ENCODE measurements at regions of chr17 and their contacts with region 1.

Region 1: GRCh38 chr17:57783106-57783742 is 38.1 kb upstream of the CCDC182 start:
- DNase-seq: peak; percentile 58 to 66 (median 64)
- H3K4me3 ChIP-seq: no peak overlapping the region
- H3K4me3 Mint-ChIP-seq: peak overlapping the region in 2 of 8 donors; percentile 2 to 23
- H3K27ac ChIP-seq: no peak overlapping the region
- H3K27ac Mint-ChIP-seq: no peak overlapping the region
- H3K4me1 ChIP-seq: peaks cover 11% of the 10 kb centered on the region
- H3K4me1 Mint-ChIP-seq: peaks cover 0 to 2% (median 0%) of the 10 kb centered on the region in 4 donors
- H3K27me3 ChIP-seq: peaks cover 8% of the 10 kb centered on the region
- H3K27me3 Mint-ChIP-seq: peaks cover 20 to 25% of the 10 kb centered on the region in 2 donors

Region 2: GRCh38 chr17:57766318-57766943 is 16.8 kb before region 1 on chr17:
- CTCF ChIA-PET with region 1: interaction called, 10 read pairs
- POLR2A ChIA-PET with region 1: no interaction called
- intact Hi-C with region 1: no loop called
- DNase-seq: no peak
- H3K4me3 ChIP-seq: no peak overlapping the region
- H3K4me3 Mint-ChIP-seq: no peak overlapping the region
- H3K27ac ChIP-seq: no peak overlapping the region
- H3K27ac Mint-ChIP-seq: no peak overlapping the region
- H3K4me1 ChIP-seq: no peaks in the 10 kb centered on the region
- H3K4me1 Mint-ChIP-seq: no peaks in the 10 kb centered on the region
- H3K27me3 ChIP-seq: no peaks in the 10 kb centered on the region
- H3K27me3 Mint-ChIP-seq: peaks cover 10 to 31% of the 10 kb centered on the region in 2 donors

Region 3: GRCh38 chr17:57849874-57850754 is 66.9 kb after region 1 on chr17 and contains the start of gene MRPS23:
- CTCF ChIA-PET with region 1: no interaction called
- POLR2A ChIA-PET with region 1: no interaction called
- intact Hi-C with region 1: no loop called
- DNase-seq: peak; percentile 94 to 99 (median 97)
- H3K4me3 ChIP-seq: peak within 1 kb of the TSS; percentile 75 to 87
- H3K4me3 Mint-ChIP-seq: peak within 1 kb of the TSS; percentile 96 to 99 (median 98)
- H3K27ac ChIP-seq: peak within 1 kb of the TSS; percentile 92
- H3K27ac Mint-ChIP-seq: peak within 1 kb of the TSS; percentile 98 to 100 (median 99)
- H3K4me1 ChIP-seq: peaks cover 32% of the 10 kb centered on the region
- H3K4me1 Mint-ChIP-seq: peaks cover 27 to 57% (median 35%) of the 10 kb centered on the region in 4 donors
- H3K27me3 ChIP-seq: no peaks in the 10 kb centered on the region
- H3K27me3 Mint-ChIP-seq: no peaks in the 10 kb centered on the region
- total RNA-seq, gene MRPS23: 28.7 to 29.5 TPM